Activated CD4-positive, alpha-beta T cell treated with anti-CD3 and anti-CD28 coated beads, Interleukin-2, amount 10 ng/mL, durations not matched to agents 24 days and 14 days (primary cell): ENCODE measurements at regions of chr9 and their contacts with region 1.

Region 1: DNA sequence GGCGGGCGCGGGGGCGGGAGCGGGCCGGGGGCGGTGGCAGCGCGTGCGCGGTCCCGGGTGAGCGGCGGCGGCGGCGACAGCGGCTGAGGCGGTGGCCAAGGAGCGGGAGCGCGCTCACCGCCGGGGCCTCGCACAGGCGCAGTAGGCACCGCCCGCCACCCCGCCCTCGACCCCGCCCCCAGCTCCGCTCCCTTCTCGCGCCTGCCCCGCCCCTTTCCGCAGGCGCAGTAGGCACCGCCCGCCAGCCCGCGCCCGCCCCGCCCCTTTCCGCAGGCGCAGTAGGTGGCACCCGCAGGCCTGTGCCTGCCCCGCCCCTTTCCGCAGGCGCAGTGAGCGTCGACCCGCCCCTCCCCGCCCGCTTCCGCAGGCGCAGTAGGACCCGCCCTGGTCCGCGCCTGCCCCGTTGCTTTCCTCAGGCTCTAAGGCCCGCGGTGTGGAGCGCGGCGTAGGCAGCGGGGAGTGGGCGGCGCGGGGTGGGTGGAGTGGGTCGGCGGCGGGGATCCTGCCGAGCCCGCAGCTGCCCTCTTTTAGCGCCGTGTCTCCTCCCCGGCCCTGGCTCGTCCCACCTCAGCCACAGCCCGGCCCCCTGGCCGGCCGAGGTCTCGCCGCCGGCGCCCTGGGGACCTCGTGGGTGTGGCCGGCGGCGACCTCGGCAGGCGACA is at the start of gene CAMSAP1:
- DNase-seq: peak; percentile 98
- H3K4me3 Mint-ChIP-seq: peak within 1 kb of the TSS; percentile 84
- H3K27ac Mint-ChIP-seq: peak within 1 kb of the TSS; percentile 80
- H3K4me1 Mint-ChIP-seq: peaks cover 35% of the 10 kb centered on the region
- H3K27me3 Mint-ChIP-seq: no peaks in the 10 kb centered on the region
- total RNA-seq, gene CAMSAP1: 45.2 and 49.9 TPM in 2 replicates

Region 2: DNA sequence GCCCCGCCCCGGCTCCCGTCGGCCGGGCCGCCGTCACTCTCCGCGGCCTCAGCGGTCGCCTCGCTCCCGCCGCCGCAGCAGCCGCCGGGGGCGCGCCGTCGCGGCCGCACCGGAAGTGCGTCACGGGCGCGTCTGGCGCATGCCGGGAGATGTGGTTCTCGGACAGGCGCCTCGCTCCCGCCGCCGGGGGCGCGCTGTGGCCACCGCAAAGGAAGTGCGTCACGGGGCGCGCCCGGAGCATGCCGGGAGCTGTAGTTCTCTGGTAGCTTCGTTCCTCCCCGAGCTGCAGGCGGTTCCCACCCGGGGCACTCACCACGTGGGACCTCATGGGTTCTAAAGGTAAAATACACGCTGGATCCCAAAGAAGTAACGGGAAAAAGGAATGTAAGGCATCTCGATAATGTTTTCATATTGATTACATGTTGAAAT is 53.7 kb after region 1 on chr9 and contains the start of gene UBAC1:
- intact Hi-C with region 1: loop called (anchors 2 kb)
- DNase-seq: peak; percentile 99
- H3K4me3 Mint-ChIP-seq: peak within 1 kb of the TSS; percentile 93
- H3K27ac Mint-ChIP-seq: peak within 1 kb of the TSS; percentile 85
- H3K4me1 Mint-ChIP-seq: peaks cover 32% of the 10 kb centered on the region
- H3K27me3 Mint-ChIP-seq: peaks cover 5% of the 10 kb centered on the region
- total RNA-seq, gene UBAC1: 43.2 and 47.7 TPM in 2 replicates